Ascending aorta (tissue), 2 donors: ENCODE measurements at regions of chr5 and their contacts with region 1.

Region 1: GRCh38 chr5:174951146-174951780 is 226.9 kb downstream of the MSX2 start:
- DNase-seq: peak in 1 of 2 donors; percentile 69
- H3K4me3 ChIP-seq: no peak overlapping the region
- H3K27ac ChIP-seq: no peak overlapping the region
- H3K4me1 ChIP-seq: peaks cover 0 to 3% of the 10 kb centered on the region in 2 donors
- H3K27me3 ChIP-seq: no peaks in the 10 kb centered on the region
- CTCF ChIP-seq: peak; percentile 70 to 84 (median 82)

Region 2: DNA sequence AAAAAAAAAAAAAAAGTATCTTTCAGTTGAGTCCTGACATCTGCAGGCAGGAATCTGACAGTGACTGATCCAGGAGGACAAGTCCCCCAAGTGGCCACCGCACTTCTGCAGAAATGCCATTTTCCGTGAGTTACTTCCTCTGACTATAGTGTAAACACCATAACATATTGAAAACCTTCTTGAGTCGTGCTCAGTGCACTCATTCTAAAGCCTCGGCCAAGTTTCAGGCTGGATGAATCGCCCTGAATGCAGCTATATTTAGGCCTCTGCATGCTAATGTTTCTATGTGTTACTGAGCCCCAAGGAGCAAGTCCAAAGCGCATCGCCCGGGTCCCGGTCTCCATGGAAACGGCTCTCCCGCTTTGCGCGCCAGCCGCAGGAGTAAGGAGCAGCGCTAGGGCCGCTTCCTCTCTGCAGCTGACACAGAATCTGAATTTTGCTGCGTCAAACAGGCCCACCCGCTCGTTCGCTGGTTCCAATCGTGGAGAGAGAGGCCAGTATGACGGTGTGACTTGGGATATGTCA is 108.5 kb after region 1 on chr5:
- intact Hi-C with region 1: loop called (anchors 5 kb)
- DNase-seq: peak in 1 of 2 donors; percentile 78
- H3K4me3 ChIP-seq: peak overlapping the region; percentile 42 to 54
- H3K27ac ChIP-seq: peak overlapping the region; percentile 59 to 65
- H3K4me1 ChIP-seq: peaks cover 0 to 4% of the 10 kb centered on the region in 2 donors
- H3K27me3 ChIP-seq: no peaks in the 10 kb centered on the region
- CTCF ChIP-seq: no peak

Region 3: DNA sequence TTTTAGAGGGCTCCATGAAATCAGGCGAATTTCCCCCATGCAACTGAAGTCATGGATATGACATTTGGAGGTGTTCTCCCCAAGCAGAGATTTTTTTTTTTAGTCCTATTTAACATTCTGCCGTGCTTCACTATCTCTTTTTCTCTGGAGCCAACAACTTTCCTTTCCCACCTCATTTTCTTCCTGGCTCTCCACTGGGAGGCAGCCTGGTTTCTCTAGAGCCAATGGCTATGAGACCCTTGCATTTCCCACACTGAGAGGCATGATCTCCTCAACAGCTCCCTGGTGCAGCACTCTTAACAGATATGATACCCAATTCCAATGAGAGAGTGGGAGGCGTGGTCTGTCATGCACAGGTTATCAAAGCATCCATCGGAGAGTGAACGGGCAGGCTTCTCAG is 181.9 kb after region 1 on chr5:
- intact Hi-C with region 1: no loop called
- DNase-seq: no peak
- H3K4me3 ChIP-seq: no peak overlapping the region
- H3K27ac ChIP-seq: no peak overlapping the region
- H3K4me1 ChIP-seq: no peaks in the 10 kb centered on the region
- H3K27me3 ChIP-seq: no peaks in the 10 kb centered on the region
- CTCF ChIP-seq: no peak